Naive thymus-derived CD4-positive, alpha-beta T cell (primary cell): ENCODE measurements at regions of chrX and their contacts with region 1.

Region 1: GRCh38 chrX:56729152-56729850 is at the start of gene NBDY:
- DNase-seq: peak in 7 of 9 donors; percentile 21 to 55 (median 40)
- ATAC-seq: peak; percentile 84
- H3K4me3 ChIP-seq: peak within 1 kb of the TSS; percentile 94
- H3K4me3 Mint-ChIP-seq: peak within 1 kb of the TSS; percentile 80 to 96 (median 90)
- H3K27ac ChIP-seq: peak within 1 kb of the TSS; percentile 95
- H3K27ac Mint-ChIP-seq: peak within 1 kb of the TSS; percentile 89 to 96 (median 95)
- H3K4me1 ChIP-seq: peaks cover 0 to 3% of the 10 kb centered on the region in 2 donors
- H3K4me1 Mint-ChIP-seq: peaks cover 3 to 43% (median 34%) of the 10 kb centered on the region in 7 donors
- H3K27me3 ChIP-seq: no peaks in the 10 kb centered on the region
- H3K27me3 Mint-ChIP-seq: no peaks in the 10 kb centered on the region
- total RNA-seq, gene NBDY: 24.9 to 45.8 (median 31.7) TPM

Region 2: GRCh38 chrX:54891573-54891972 is 1837.7 kb before region 1 on chrX:
- CTCF ChIA-PET with region 1: no interaction called
- POLR2A ChIA-PET with region 1: no interaction called
- intact Hi-C with region 1: loop called in 1 of 2 experiments (anchors 5 kb)
- DNase-seq: peak in 7 of 9 donors; percentile 11 to 54 (median 40)
- ATAC-seq: peak; percentile 60
- H3K4me3 ChIP-seq: no peak overlapping the region
- H3K4me3 Mint-ChIP-seq: no peak overlapping the region
- H3K27ac ChIP-seq: no peak overlapping the region
- H3K27ac Mint-ChIP-seq: no peak overlapping the region
- H3K4me1 ChIP-seq: no peaks in the 10 kb centered on the region
- H3K4me1 Mint-ChIP-seq: peaks cover 0 to 1% (median 0%) of the 10 kb centered on the region in 7 donors
- H3K27me3 ChIP-seq: no peaks in the 10 kb centered on the region
- H3K27me3 Mint-ChIP-seq: peaks cover 0 to 9% (median 4%) of the 10 kb centered on the region in 5 donors

Region 3: DNA sequence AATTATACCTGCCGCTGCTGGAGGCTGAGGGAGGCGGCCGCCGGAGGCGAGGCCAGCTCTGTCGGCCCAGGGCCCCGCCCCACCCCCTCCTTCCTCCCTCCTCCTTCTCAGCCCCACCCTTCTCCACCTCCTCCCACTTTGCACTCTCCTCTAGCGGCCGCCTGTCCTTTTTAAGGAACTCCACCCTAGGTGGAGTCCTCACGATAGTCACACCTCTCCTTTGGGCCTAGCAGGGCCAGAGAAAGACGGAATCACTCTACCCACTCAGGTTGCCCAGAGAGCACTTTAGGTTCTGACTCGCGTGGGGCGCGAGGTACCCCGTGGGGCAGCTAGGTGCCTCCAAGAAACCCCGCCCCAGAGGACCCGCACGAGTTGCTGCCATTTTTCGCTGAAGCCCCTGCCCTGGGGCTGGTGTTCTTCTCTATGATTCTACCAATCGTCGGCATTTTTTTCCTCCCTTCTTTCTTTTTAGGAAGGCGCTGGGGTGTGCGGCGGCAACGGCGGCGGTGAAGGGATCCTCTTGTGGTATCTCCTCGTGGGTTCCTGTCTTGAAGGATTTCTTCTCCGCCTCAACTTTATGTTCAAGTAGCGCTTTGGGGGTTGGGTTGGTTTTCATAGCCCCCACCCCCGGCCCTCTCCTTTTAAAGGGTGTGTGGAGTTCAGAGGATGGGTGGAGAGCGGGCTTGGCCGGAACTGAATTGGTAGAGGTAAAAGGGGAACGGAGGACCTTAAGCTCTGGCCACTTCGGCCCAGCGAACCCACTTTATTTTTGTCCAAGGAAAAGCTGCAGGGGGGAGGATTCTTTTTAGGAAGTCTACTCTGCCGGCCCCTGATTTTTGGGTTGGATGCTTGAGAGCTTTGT is 496.8 kb before region 1 on chrX and contains the start of gene KLF8:
- CTCF ChIA-PET with region 1: no interaction called
- POLR2A ChIA-PET with region 1: no interaction called
- intact Hi-C with region 1: loop called in 1 of 2 experiments (anchors 5 kb)
- DNase-seq: peak in 6 of 9 donors; percentile 3 to 40 (median 8)
- ATAC-seq: peak; percentile 73
- H3K4me3 ChIP-seq: peak within 1 kb of the TSS; percentile 41
- H3K4me3 Mint-ChIP-seq: peak within 1 kb of the TSS; percentile 80 to 89 (median 84)
- H3K27ac ChIP-seq: no peak within 1 kb of the TSS
- H3K27ac Mint-ChIP-seq: peak within 1 kb of the TSS in 6 of 9 donors; percentile 1 to 90 (median 32)
- H3K4me1 ChIP-seq: peaks cover 0 to 5% of the 10 kb centered on the region in 2 donors
- H3K4me1 Mint-ChIP-seq: peaks cover 5 to 48% (median 18%) of the 10 kb centered on the region in 7 donors
- H3K27me3 ChIP-seq: no peaks in the 10 kb centered on the region
- H3K27me3 Mint-ChIP-seq: peaks cover 0 to 4% (median 0%) of the 10 kb centered on the region in 5 donors
- total RNA-seq, gene KLF8: 0.38 to 17.9 (median 6.3) TPM

Region 4: DNA sequence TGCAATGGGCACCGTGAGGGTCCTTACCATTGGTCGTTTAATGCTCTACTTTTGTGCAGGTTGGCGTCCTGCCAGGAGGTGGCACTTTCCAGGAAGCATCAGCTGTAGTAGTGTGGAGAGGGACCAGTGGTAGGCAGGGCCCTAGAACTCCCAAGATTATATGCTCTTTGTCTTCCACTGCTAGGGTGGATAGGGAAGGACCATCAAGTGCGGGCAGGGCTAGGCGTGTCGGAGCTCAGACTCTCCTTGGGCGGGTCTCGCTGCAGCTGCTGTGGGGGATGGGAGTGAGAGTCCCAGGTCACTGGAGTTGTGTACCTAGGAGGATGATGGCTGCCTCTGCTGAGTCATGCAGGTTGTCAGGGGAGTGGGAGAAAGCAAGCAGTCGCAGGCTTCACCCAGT is 362.4 kb before region 1 on chrX:
- CTCF ChIA-PET with region 1: no interaction called
- POLR2A ChIA-PET with region 1: no interaction called
- intact Hi-C with region 1: loop called in 1 of 2 experiments (anchors 1 kb)
- DNase-seq: no peak
- ATAC-seq: no peak
- H3K4me3 ChIP-seq: no peak overlapping the region
- H3K4me3 Mint-ChIP-seq: peak overlapping the region in 3 of 10 donors; percentile 21 to 53 (median 23)
- H3K27ac ChIP-seq: no peak overlapping the region
- H3K27ac Mint-ChIP-seq: peak overlapping the region in 7 of 9 donors; percentile 19 to 96 (median 47)
- H3K4me1 ChIP-seq: peaks cover 4 to 52% of the 10 kb centered on the region in 2 donors
- H3K4me1 Mint-ChIP-seq: peaks cover 19 to 64% (median 59%) of the 10 kb centered on the region in 7 donors
- H3K27me3 ChIP-seq: no peaks in the 10 kb centered on the region
- H3K27me3 Mint-ChIP-seq: no peaks in the 10 kb centered on the region

Region 5: GRCh38 chrX:56397636-56398035 is 331.7 kb before region 1 on chrX:
- CTCF ChIA-PET with region 1: no interaction called
- POLR2A ChIA-PET with region 1: no interaction called
- intact Hi-C with region 1: loop called in 1 of 2 experiments (anchors 5 kb)
- DNase-seq: peak in 5 of 9 donors; percentile 12 to 47 (median 25)
- ATAC-seq: peak; percentile 53
- H3K4me3 ChIP-seq: no peak overlapping the region
- H3K4me3 Mint-ChIP-seq: peak overlapping the region; percentile 10 to 77 (median 66)
- H3K27ac ChIP-seq: no peak overlapping the region
- H3K27ac Mint-ChIP-seq: peak overlapping the region; percentile 38 to 85 (median 76)
- H3K4me1 ChIP-seq: peaks cover 0 to 11% of the 10 kb centered on the region in 2 donors
- H3K4me1 Mint-ChIP-seq: peaks cover 9 to 68% (median 57%) of the 10 kb centered on the region in 7 donors
- H3K27me3 ChIP-seq: no peaks in the 10 kb centered on the region
- H3K27me3 Mint-ChIP-seq: no peaks in the 10 kb centered on the region

Region 6: GRCh38 chrX:56618323-56618722 is 111.0 kb before region 1 on chrX:
- CTCF ChIA-PET with region 1: no interaction called
- POLR2A ChIA-PET with region 1: no interaction called
- intact Hi-C with region 1: loop called in 1 of 2 experiments (anchors 5 kb)
- DNase-seq: no peak
- ATAC-seq: no peak
- H3K4me3 ChIP-seq: no peak overlapping the region
- H3K4me3 Mint-ChIP-seq: no peak overlapping the region
- H3K27ac ChIP-seq: no peak overlapping the region
- H3K27ac Mint-ChIP-seq: peak overlapping the region in 1 of 9 donors; percentile 48
- H3K4me1 ChIP-seq: no peaks in the 10 kb centered on the region
- H3K4me1 Mint-ChIP-seq: peaks cover 0 to 19% (median 10%) of the 10 kb centered on the region in 7 donors
- H3K27me3 ChIP-seq: no peaks in the 10 kb centered on the region
- H3K27me3 Mint-ChIP-seq: no peaks in the 10 kb centered on the region

Region 7: GRCh38 chrX:56978172-56978571 is 248.9 kb after region 1 on chrX:
- CTCF ChIA-PET with region 1: interaction called, 6 read pairs
- POLR2A ChIA-PET with region 1: interaction called, 8 read pairs
- intact Hi-C with region 1: loop called (anchors 2 to 10 kb)
- DNase-seq: peak in 8 of 9 donors; percentile 19 to 72 (median 56)
- ATAC-seq: peak; percentile 72
- H3K4me3 ChIP-seq: no peak overlapping the region
- H3K4me3 Mint-ChIP-seq: no peak overlapping the region
- H3K27ac ChIP-seq: no peak overlapping the region
- H3K27ac Mint-ChIP-seq: peak overlapping the region in 5 of 9 donors; percentile 4 to 75 (median 27)
- H3K4me1 ChIP-seq: no peaks in the 10 kb centered on the region
- H3K4me1 Mint-ChIP-seq: peaks cover 0 to 6% (median 0%) of the 10 kb centered on the region in 7 donors
- H3K27me3 ChIP-seq: no peaks in the 10 kb centered on the region
- H3K27me3 Mint-ChIP-seq: no peaks in the 10 kb centered on the region

Region 8: GRCh38 chrX:56995271-56995994 is 266.1 kb after region 1 on chrX and contains the start of gene SPIN3:
- CTCF ChIA-PET with region 1: no interaction called
- POLR2A ChIA-PET with region 1: no interaction called
- intact Hi-C with region 1: no loop called
- DNase-seq: peak; percentile 15 to 67 (median 48)
- ATAC-seq: peak; percentile 81
- H3K4me3 ChIP-seq: peak within 1 kb of the TSS; percentile 50
- H3K4me3 Mint-ChIP-seq: peak within 1 kb of the TSS; percentile 91 to 98 (median 95)
- H3K27ac ChIP-seq: peak within 1 kb of the TSS; percentile 42
- H3K27ac Mint-ChIP-seq: peak within 1 kb of the TSS; percentile 90 to 97 (median 93)
- H3K4me1 ChIP-seq: peaks cover 0 to 4% of the 10 kb centered on the region in 2 donors
- H3K4me1 Mint-ChIP-seq: peaks cover 11 to 58% (median 38%) of the 10 kb centered on the region in 7 donors
- H3K27me3 ChIP-seq: no peaks in the 10 kb centered on the region
- H3K27me3 Mint-ChIP-seq: no peaks in the 10 kb centered on the region
- total RNA-seq, gene SPIN3: 8.8 to 24.2 (median 13.5) TPM